ENCODE measurements at regions of chr7 and their contacts with region 1.

Region 1: DNA sequence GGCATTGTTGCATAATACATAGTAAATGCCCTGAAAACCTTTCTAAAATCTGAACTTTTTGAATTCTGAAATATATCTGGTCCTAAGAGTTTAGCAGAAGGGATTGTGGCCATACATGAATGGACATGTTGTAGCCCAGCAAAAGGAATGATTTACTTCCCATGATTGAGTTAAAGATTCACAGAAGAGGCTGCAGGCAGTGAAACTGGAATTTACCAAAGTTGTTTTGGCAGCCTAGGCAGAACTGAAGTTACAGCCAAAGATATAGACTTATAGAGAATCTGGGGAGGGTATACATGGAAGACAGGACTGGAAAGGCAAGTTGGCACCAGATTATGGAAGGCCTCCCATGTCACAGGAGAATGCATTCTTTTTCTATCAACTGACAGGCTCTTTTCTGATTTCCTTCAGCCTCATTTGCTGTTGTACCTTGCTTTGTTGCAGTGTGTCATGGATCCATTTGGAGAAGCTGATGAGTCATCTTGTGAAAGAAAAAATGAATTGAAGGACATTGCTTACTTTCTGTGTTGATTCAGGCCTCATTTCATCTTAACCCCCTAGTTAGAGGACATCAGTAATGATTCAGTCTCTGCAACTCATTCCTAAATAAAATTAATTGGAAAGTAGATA is 356.2 kb upstream of the LRGUK start:
- DNase-seq: no peak
- H3K4me3 ChIP-seq: no peak overlapping the region
- H3K27ac ChIP-seq: peak overlapping the region; percentile 67 to 100
- H3K4me1 ChIP-seq: peaks cover 12 to 74% of the 10 kb centered on the region in 2 experiments
- H3K27me3 ChIP-seq: no peaks in the 10 kb centered on the region
- CTCF ChIP-seq: no peak
- EP300 ChIP-seq: no peak
- RAD21 ChIP-seq: no peak

Region 2: GRCh38 chr7:133587903-133588302 is 183.1 kb before region 1 on chr7:
- CTCF ChIA-PET with region 1: no interaction called
- POLR2A ChIA-PET with region 1: no interaction called
- DNase-seq: no peak
- H3K4me3 ChIP-seq: no peak overlapping the region
- H3K27ac ChIP-seq: peak overlapping the region in 1 of 2 experiments; percentile 56; a peak in 1 of 4 replicates
- H3K4me1 ChIP-seq: peaks cover 3 to 7% of the 10 kb centered on the region in 2 experiments; a peak in 2 of 4 replicates
- H3K27me3 ChIP-seq: no peaks in the 10 kb centered on the region
- CTCF ChIP-seq: no peak
- EP300 ChIP-seq: no peak; a peak in 1 of 4 replicates
- RAD21 ChIP-seq: no peak

Region 3: GRCh38 chr7:133753513-133753912 is 17.5 kb before region 1 on chr7:
- CTCF ChIA-PET with region 1: interaction called, 34 read pairs
- POLR2A ChIA-PET with region 1: interaction called, 16 read pairs
- DNase-seq: no peak
- H3K4me3 ChIP-seq: no peak overlapping the region
- H3K27ac ChIP-seq: peak overlapping the region in 1 of 2 experiments; percentile 100; a peak in 2 of 4 replicates
- H3K4me1 ChIP-seq: peaks cover 0 to 24% of the 10 kb centered on the region in 2 experiments; a peak in 2 of 4 replicates
- H3K27me3 ChIP-seq: no peaks in the 10 kb centered on the region
- CTCF ChIP-seq: no peak
- EP300 ChIP-seq: no peak
- RAD21 ChIP-seq: no peak

Measured in SK-N-SH (cell line).